Sciatic nerve (tissue), 2 donors: ENCODE measurements at regions of chr16 and their contacts with region 1.

Region 1: GRCh38 chr16:10957771-10958486 is 13.6 kb downstream of the CLEC16A start:
- DNase-seq: no peak
- ATAC-seq: no peak

Region 2: DNA sequence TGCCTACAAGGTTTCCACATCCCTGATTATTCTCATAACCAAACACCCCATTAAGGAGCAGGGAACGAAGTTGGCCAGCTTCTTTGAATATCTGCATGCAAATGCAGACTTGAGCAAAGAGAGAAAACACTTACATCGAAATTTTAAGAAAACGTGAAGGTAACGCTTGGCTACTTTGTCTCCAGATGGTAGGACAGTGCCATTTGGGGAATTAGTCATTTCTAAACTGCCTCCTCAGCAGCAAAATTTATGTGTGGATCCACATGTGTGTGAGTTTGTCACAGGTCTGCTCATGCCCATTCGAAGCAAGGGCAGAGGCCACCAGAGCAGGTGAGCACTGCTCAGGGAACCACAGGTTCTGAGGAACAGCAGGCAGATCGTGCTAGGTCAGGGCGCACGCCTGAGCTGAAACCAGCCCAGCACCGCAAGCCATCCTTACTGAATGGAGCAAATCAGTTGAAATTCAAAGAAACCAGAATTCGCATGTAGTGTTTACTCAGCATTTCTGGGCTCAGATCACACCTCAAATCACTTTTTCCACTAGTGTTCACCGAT is 217.9 kb after region 1 on chr16:
- intact Hi-C with region 1: no loop called
- DNase-seq: no peak
- ATAC-seq: no peak

Region 3: GRCh38 chr16:11700264-11701029 is 742.5 kb after region 1 on chr16:
- intact Hi-C with region 1: loop called (anchors 5 kb)
- DNase-seq: no peak
- ATAC-seq: no peak